ENCODE measurements at regions of chr3 and their contacts with region 1.

Region 1: GRCh38 chr3:24640330-24640877 is 145.8 kb upstream of the THRB start:
- DNase-seq: peak; percentile 60
- H3K4me3 Mint-ChIP-seq: no peak overlapping the region
- H3K27ac Mint-ChIP-seq: peak overlapping the region; percentile 20
- H3K4me1 Mint-ChIP-seq: peaks cover 7% of the 10 kb centered on the region
- H3K27me3 Mint-ChIP-seq: no peaks in the 10 kb centered on the region
- CTCF ChIP-seq: peak; percentile 71

Region 2: GRCh38 chr3:24185738-24186384 is 454.5 kb before region 1 on chr3:
- CTCF ChIA-PET with region 1: interaction called, 4 read pairs
- POLR2A ChIA-PET with region 1: no interaction called
- intact Hi-C with region 1: loop called (anchors 2 kb)
- DNase-seq: peak; percentile 63
- H3K4me3 Mint-ChIP-seq: no peak overlapping the region
- H3K27ac Mint-ChIP-seq: peak overlapping the region; percentile 80
- H3K4me1 Mint-ChIP-seq: no peaks in the 10 kb centered on the region
- H3K27me3 Mint-ChIP-seq: no peaks in the 10 kb centered on the region
- CTCF ChIP-seq: peak; percentile 74

Region 3: GRCh38 chr3:24365194-24365612 is 275.2 kb before region 1 on chr3:
- CTCF ChIA-PET with region 1: interaction called, 3 read pairs
- POLR2A ChIA-PET with region 1: no interaction called
- intact Hi-C with region 1: loop called (anchors 2 kb)
- DNase-seq: peak; percentile 95
- H3K4me3 Mint-ChIP-seq: peak overlapping the region; percentile 21
- H3K27ac Mint-ChIP-seq: peak overlapping the region; percentile 87
- H3K4me1 Mint-ChIP-seq: peaks cover 21% of the 10 kb centered on the region
- H3K27me3 Mint-ChIP-seq: no peaks in the 10 kb centered on the region
- CTCF ChIP-seq: no peak

Region 4: DNA sequence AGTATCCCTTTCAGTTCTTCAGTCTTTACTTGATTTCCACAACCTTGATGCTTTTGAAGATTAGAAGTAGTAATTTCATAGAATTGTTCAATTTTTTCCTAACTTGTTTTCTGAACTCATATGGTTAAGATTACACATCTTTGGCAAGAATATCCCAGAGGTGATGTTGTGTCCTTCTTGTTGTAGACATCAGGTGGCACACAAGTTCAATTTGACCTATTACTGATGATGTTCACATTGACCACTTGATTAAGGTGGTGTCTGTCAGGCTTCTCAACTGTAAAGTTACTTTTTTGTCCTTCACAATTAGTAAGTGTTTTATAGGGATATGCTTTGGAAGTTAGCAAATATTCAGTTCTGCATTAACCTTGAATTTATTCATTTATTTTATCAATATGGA is 111.2 kb before region 1 on chr3:
- CTCF ChIA-PET with region 1: interaction called, 3 read pairs
- POLR2A ChIA-PET with region 1: no interaction called
- intact Hi-C with region 1: loop called (anchors 1 kb)
- DNase-seq: no peak
- H3K4me3 Mint-ChIP-seq: no peak overlapping the region
- H3K27ac Mint-ChIP-seq: no peak overlapping the region
- H3K4me1 Mint-ChIP-seq: peaks cover 4% of the 10 kb centered on the region
- H3K27me3 Mint-ChIP-seq: no peaks in the 10 kb centered on the region
- CTCF ChIP-seq: no peak